CD4-positive, alpha-beta T cell (primary cell): ENCODE measurements at regions of chr9 and their contacts with region 1.

Region 1: DNA sequence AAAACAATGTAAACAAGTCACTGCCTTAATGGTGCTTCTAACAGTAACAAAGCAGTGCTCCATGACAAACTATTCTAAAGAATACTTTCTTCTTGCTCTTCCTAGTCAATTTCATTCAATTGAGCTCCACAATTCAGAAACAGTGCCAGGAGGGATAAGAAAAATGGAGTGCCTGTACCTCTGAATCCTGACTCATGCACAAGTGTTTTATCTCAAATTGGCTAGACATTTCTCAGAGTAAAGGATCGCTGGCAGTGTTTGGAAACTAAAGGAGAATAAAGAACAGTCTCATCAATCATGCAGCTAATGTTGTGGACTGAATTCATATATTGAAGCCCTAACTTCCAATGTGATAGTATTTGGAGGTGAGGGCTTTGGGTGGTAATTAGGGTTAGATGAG is 27.6 kb downstream of the SLC25A51 start:
- DNase-seq: no peak
- ATAC-seq: no peak
- H3K4me3 ChIP-seq: no peak overlapping the region
- H3K4me3 Mint-ChIP-seq: no peak overlapping the region
- H3K27ac ChIP-seq: no peak overlapping the region
- H3K27ac Mint-ChIP-seq: no peak overlapping the region
- H3K4me1 ChIP-seq: no peaks in the 10 kb centered on the region
- H3K4me1 Mint-ChIP-seq: no peaks in the 10 kb centered on the region
- H3K27me3 ChIP-seq: no peaks in the 10 kb centered on the region
- H3K27me3 Mint-ChIP-seq: no peaks in the 10 kb centered on the region
- CTCF ChIP-seq: no peak

Region 2: DNA sequence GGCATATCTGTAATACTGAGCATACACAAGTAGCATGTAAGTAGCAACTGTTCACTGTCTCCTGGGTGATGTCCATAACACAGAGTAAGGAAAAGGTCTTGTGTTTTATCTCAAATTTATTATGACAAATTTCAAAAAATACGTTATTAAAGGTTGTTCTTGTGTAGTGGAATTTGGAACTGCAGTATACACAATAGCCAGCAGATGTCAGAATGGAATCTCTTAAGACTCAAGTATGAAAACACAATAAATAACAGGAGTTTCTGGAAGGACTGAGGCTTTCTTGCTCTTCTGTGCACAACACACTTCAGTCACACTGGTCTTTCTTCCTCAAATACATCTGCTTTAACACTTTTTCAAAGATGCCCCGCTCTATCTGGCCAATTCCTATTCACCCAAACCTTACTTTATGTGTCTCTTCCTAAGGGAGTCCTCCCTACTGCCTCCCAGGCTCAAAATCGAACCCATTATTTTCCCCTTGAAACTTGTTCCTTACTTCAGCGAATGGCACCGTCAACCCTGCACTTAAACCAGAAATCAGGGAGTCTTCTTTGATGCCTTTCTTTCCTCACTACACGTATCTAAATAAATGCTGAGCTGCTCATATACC is 293.7 kb before region 1 on chr9:
- CTCF ChIA-PET with region 1: no interaction called
- POLR2A ChIA-PET with region 1: no interaction called
- intact Hi-C with region 1: loop called in 1 of 2 experiments (anchors 10 kb)
- DNase-seq: peak in 3 of 14 experiments; percentile 45 to 63 (median 62)
- ATAC-seq: peak; percentile 79
- H3K4me3 ChIP-seq: no peak overlapping the region
- H3K4me3 Mint-ChIP-seq: no peak overlapping the region
- H3K27ac ChIP-seq: no peak overlapping the region
- H3K27ac Mint-ChIP-seq: no peak overlapping the region
- H3K4me1 ChIP-seq: no peaks in the 10 kb centered on the region
- H3K4me1 Mint-ChIP-seq: peaks cover 18% of the 10 kb centered on the region
- H3K27me3 ChIP-seq: no peaks in the 10 kb centered on the region
- H3K27me3 Mint-ChIP-seq: no peaks in the 10 kb centered on the region
- CTCF ChIP-seq: peak; percentile 69

Region 3: DNA sequence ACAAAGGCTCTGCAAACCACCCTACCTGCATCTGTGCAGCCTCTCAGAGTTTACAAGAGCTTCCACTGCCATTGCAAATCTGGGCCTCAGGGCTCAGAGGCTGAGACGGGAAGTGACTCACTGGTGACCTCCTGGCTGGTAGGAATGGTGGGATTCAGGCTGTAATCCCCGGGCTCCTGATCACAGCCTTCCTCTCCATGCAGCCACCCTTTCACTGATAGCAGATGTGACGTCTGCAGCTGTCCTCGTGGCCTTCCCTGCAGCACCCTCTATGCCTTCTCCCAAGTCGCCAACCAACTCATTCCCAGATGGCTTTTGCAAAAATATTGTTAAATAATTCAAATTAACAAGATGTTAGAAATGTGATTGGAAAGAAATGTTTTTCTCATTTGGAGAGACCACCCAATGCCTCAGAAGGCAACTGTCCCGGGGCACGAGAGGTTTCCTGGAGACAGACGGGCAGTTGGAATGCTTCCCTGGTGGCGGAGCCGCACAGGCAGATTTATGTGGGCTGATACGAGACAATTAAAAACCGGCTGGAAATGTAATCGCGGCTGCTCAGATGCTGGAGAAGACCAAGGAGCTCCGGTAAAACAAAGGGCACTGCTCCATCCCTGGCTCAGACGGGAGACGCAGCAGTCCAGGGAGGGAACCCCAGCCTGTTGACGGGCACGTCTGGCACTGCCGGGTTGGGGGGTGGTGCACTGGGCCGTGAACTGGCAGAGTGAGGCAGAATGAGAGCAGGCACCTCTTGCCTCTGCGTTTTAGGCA is 61.9 kb after region 1 on chr9:
- CTCF ChIA-PET with region 1: no interaction called
- POLR2A ChIA-PET with region 1: no interaction called
- intact Hi-C with region 1: loop called in 1 of 2 experiments (anchors 10 kb)
- DNase-seq: no peak
- ATAC-seq: no peak
- H3K4me3 ChIP-seq: no peak overlapping the region
- H3K4me3 Mint-ChIP-seq: no peak overlapping the region
- H3K27ac ChIP-seq: no peak overlapping the region
- H3K27ac Mint-ChIP-seq: no peak overlapping the region
- H3K4me1 ChIP-seq: no peaks in the 10 kb centered on the region
- H3K4me1 Mint-ChIP-seq: no peaks in the 10 kb centered on the region
- H3K27me3 ChIP-seq: no peaks in the 10 kb centered on the region
- H3K27me3 Mint-ChIP-seq: no peaks in the 10 kb centered on the region
- CTCF ChIP-seq: no peak